Uterus (tissue), 4 donors: ENCODE measurements at regions of chr12 and their contacts with region 1.

Region 1: DNA sequence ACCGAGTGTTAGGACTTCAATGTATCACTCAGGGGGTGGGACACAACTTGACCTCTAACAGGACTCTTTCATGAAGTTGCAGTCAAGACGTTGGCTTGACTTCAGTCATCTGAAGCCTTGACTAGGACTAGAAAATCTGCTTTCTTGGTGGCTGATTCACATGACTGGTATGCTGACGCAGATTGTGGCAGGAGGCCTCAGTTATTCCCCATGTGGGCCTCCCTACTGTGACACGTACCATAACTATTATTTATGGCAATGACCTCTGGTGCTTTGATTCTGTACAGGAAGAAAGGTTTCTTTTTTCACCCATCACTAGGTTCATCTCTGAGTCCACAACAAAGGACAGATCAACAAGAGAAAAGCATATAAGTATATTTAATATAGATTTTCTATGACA is 270.4 kb downstream of the NEDD1 start:
- DNase-seq: no peak
- H3K4me3 ChIP-seq: no peak overlapping the region
- H3K27ac ChIP-seq: no peak overlapping the region
- H3K4me1 ChIP-seq: no peaks in the 10 kb centered on the region
- H3K27me3 ChIP-seq: no peaks in the 10 kb centered on the region
- CTCF ChIP-seq: no peak
- POLR2A ChIP-seq: no peak

Region 2: DNA sequence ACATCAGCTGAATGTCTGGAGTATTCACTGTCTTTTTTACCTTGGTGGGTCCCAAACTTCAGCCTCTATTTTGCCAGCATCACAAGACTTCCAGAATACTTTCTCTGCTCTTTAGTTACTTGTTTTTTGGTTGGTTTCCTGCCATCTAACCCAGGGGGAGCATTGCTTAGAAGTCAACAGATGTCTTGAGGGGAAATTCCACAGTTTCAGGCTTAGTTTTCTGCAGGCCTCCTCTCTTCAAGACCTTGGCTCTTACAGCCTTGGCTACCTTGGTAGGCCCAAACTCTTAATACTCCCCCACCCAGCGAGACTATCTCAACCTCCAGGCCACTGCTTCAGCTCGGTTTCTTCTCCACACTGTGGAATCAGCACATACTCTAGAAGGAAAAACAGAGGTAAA is 228.7 kb before region 1 on chr12:
- intact Hi-C with region 1: no loop called
- DNase-seq: no peak
- H3K4me3 ChIP-seq: no peak overlapping the region
- H3K27ac ChIP-seq: no peak overlapping the region
- H3K4me1 ChIP-seq: no peaks in the 10 kb centered on the region
- H3K27me3 ChIP-seq: no peaks in the 10 kb centered on the region
- CTCF ChIP-seq: no peak
- POLR2A ChIP-seq: no peak

Region 3: DNA sequence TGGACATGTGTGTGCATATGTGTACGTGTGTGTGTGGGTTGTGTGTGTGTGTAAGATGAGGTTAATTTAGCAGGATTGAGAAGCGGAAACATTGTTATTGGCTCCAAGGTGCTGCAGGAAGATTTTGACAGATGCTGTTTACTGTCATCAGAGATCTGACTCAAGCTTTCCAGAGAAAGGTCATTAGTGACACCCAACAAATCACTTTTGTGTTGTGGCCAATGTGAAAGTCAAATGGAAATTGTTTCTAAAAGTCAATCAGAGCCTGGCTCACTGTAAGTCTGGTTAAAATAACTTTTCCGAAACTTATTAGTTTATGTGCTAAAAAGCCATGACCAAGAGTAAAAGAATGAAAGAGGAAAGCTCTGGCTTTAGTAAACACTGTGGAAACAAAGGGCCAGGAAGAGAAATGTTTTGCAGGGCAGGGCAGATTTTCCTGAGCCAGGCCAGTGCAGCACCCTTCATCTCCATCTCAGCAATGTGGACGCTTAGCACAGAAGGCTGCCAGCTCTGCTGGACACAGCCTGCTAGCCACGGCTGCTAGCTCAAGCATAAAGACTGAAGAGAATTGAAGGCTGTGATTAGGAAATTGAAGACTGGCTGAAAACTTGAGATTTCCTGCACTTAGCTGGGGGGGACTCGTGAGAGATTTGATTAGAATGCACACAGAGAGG is 34.6 kb before region 1 on chr12:
- intact Hi-C with region 1: no loop called
- DNase-seq: no peak
- H3K4me3 ChIP-seq: no peak overlapping the region
- H3K27ac ChIP-seq: no peak overlapping the region
- H3K4me1 ChIP-seq: no peaks in the 10 kb centered on the region
- H3K27me3 ChIP-seq: no peaks in the 10 kb centered on the region
- CTCF ChIP-seq: no peak
- POLR2A ChIP-seq: no peak

Region 4: GRCh38 chr12:98870504-98870903 is 1693.0 kb after region 1 on chr12:
- intact Hi-C with region 1: loop called (anchors 10 kb)
- DNase-seq: no peak
- H3K4me3 ChIP-seq: no peak overlapping the region
- H3K27ac ChIP-seq: no peak overlapping the region
- H3K4me1 ChIP-seq: no peaks in the 10 kb centered on the region
- H3K27me3 ChIP-seq: no peaks in the 10 kb centered on the region
- CTCF ChIP-seq: no peak
- POLR2A ChIP-seq: no peak